ENCODE measurements at regions of chr16 and their contacts with region 1.

Region 1: GRCh38 chr16:89489040-89489721 is 1.2 kb downstream of the ANKRD11 start:
- DNase-seq: peak; percentile 96
- H3K4me3 ChIP-seq: peak overlapping the region; percentile 83
- H3K27ac ChIP-seq: peak overlapping the region; percentile 92
- H3K4me1 ChIP-seq: peaks cover 56% of the 10 kb centered on the region
- CTCF ChIP-seq: peak; percentile 38; the same call in 1 of the 2 replicates

Region 2: GRCh38 chr16:89331371-89332109 is 157.6 kb before region 1 on chr16:
- CTCF ChIA-PET with region 1: no interaction called
- POLR2A ChIA-PET with region 1: no interaction called
- intact Hi-C with region 1: loop called (anchors 2 kb)
- DNase-seq: no peak
- H3K4me3 ChIP-seq: no peak overlapping the region
- H3K27ac ChIP-seq: peak overlapping the region; percentile 45
- H3K4me1 ChIP-seq: peaks cover 72% of the 10 kb centered on the region
- CTCF ChIP-seq: no peak

Region 3: DNA sequence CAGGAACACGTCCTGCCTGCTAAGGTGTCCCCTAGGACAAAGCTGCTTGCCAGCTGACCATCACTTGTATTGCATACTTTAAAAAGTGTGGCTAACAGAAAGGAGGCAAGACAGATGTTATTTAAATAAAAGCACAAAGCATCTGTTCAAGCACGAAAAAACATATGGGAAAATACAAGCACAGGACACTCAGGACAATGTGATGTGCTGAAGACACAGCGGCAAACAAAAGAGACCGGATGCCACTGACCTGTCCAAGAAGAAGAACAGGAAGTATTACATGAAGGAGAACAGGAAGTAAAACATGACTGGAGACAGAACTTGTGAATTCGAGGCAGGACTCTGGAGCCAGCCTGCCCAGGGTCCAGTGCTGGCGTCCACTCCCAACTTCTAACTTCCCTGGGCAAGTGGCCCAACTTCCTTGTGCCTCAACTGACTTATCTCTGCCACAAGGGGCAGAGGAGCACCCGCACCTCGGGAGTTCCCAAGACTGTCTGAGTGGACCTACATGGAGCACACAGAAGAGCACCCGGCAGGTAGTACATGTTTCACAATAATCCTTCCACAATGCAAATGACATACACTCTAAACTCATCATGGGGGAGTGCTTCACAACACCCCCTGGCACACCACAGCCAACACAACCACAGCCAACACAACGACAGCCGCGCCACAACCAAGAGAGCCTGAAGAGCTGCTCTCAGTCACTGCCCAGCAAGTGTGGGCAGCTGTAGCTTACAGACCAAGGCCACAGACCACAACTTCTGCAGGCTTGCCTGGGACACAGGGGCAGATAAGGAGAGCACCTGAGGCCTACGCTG is 35.5 kb before region 1 on chr16:
- CTCF ChIA-PET with region 1: no interaction called
- POLR2A ChIA-PET with region 1: interaction called, 3 read pairs
- intact Hi-C with region 1: loop called (anchors 5 kb)
- DNase-seq: no peak
- H3K4me3 ChIP-seq: no peak overlapping the region
- H3K27ac ChIP-seq: no peak overlapping the region
- H3K4me1 ChIP-seq: peaks cover 57% of the 10 kb centered on the region
- CTCF ChIP-seq: peak; percentile 47

Region 4: DNA sequence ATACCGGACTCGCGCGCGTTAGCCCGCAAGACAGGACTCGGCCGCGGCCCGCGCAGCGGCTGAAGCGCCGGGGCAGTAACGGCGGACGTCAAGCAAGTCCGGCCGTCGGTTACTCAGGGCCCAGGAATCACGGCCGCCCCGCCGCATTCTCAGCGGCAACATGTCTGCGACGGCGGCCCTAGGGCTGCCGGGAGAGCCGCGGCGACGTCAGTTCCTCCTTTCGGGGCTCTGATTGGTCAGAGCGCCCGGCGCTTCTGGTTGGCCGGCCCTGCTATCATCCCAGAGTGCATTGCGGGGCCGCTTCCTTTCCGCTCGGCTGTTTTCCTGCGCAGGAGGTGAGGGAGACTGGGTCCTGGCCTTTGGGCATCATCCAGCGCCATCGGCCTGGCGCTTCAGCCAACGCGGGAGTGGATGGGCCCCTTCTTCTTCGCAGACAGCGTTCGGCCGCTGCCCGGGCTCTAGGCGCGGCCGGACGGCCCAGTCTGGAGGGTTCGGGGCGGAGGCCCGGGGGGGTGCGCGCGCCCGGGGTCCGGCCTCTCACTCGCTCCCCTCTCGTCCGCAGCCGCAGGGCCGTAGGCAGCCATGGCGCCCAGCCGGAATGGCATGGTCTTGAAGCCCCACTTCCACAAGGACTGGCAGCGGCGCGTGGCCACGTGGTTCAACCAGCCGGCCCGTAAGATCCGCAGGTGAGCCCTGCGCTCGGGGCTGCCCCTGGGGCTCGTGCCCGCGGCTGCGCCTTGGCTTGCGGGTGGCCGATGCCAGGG is 71.4 kb after region 1 on chr16 and contains the start of gene RPL13:
- CTCF ChIA-PET with region 1: no interaction called
- POLR2A ChIA-PET with region 1: no interaction called
- intact Hi-C with region 1: loop called (anchors 5 kb)
- DNase-seq: peak; percentile 97
- H3K4me3 ChIP-seq: peak within 1 kb of the TSS; percentile 98
- H3K27ac ChIP-seq: peak within 1 kb of the TSS; percentile 67
- H3K4me1 ChIP-seq: peaks cover 44% of the 10 kb centered on the region
- CTCF ChIP-seq: no peak
- total RNA-seq, gene RPL13: 7,440 and 9,791 TPM in 2 replicates